ENCODE measurements at regions of chr1 and their contacts with region 1.

Region 1: DNA sequence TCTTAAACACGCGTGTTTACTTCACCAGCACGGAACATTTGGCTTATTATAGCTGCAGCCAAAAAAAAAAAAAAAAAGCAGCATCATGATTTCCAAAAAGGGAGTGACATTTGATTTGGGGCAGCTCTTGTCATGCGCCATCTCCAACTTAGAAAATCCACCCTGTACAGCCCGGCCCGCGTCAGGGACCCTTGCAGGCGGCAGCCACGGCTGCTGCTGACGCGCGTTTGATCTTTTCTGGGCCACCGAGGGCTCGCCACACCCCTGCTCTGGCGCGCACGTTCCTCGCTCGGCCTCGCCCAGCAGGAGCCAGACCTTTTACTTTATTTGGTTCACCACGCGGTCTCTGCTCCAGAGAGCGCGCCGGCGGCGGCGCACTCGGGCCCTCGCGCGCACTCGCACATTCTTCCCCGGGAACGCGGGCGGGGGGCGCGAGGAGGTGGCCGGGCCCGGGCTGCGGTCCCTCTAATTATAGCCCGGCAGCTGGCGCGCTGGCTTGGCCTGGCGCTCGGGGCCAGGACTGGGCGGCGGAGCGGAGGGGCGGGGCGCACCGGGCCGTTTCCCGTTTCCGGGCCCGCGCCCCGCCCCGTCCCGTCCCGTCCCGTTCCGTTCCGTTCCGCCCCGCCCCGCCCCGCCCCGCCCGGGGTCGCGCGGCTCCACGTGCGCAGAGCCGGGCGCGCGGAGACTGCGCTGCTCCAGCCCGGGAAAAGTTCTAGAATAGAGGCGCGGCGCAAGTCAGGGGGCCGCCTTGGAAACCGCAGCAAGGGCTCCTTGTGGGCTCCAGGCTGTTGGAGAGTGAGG is 10.2 kb downstream of the IRF2BP2 start:
- DNase-seq: peak; percentile 94

Region 2: GRCh38 chr1:234355782-234356510 is 243.9 kb before region 1 on chr1:
- intact Hi-C with region 1: no loop called
- DNase-seq: no peak

Region 3: GRCh38 chr1:234499119-234499942 is 100.5 kb before region 1 on chr1:
- intact Hi-C with region 1: loop called (anchors 2 kb)
- DNase-seq: peak; percentile 96

Region 4: DNA sequence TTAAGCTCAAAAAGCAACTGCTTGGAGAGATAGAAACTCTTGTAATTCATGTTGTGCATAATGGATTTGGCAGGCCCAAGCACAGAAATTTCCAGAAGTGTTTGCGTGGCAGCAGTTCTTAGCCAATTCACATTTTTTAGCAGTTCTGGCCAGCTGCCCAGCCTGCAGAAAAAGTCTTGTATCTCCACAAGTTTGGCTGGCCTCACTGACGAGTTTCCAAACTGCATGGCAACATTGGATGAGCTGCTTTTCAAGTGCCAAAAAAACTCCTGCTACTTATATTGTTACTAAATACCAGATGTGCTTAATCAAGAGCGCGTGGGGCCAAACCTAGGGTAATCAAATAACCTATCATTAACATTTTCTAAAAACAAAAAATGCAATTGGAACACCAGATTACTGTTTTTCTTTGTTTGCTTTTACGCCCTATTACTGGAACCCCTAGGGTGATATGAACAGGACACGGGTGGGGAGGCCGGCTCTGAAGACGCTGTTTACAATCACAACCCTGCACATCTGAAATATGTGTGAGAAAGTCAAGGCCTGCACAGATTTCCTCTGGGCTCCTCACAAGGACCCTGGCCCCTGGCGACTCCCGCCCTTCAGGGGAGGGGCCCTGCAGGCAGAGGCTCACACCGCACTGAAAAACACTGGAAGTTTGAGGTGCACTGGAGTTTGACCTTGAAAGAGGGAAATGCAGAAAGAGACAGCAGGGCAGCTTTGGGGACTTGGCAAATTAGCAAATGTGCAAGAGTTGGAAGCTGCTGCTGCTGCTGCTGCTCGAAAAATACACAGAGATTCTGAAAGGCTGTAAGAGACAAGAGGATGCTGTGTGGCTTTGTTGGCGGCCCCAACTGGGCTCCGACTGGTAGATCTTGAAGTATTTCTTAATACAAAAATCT is 65.6 kb before region 1 on chr1:
- intact Hi-C with region 1: loop called (anchors 2 kb)
- DNase-seq: peak; percentile 92

Region 5: GRCh38 chr1:234584926-234585325 is 14.9 kb before region 1 on chr1:
- intact Hi-C with region 1: loop called (anchors 2 kb)
- DNase-seq: no peak

Measured in cardiac septum (tissue), 1 donor.